ENCODE measurements at regions of chr6 and their contacts with region 1.

Region 1: DNA sequence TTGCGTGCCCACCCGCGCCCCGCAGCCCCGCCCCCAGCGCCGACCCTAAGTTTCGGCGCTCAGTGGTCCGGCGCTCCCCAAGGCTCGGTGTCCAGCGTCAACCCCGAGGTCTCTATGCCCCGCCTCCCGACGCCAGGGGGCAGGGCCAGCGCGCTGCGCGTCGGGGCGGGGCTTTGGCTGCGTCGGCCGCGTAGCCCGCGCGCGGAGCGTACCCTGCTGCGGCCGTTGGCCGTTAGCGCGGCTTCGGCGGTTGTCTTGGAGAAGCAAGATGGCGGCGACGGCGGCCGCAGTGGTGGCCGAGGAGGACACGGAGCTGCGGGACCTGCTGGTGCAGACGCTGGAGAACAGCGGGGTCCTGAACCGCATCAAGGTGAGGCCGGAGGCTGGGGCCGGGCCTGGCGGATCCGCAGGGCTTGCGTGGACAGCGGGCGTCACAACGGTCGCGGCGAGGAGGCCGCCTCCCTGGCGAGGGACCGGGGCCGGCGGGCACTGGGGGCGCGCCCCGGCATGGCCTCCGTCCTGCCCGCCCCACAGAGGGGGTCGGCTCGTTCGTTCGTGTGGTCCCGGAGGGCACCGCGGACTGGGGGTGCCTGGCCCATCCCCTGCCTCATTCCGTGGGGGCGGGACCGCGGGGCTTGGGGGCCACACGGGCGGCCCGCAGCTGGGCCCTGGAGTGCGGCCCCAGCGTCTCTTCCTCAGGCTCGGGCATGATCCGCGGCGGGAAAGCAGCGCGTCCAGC is at the start of gene CEP43:
- H3K4me3 ChIP-seq: peak within 1 kb of the TSS; percentile 98
- H3K27ac ChIP-seq: peak within 1 kb of the TSS; percentile 82
- H3K4me1 ChIP-seq: peaks cover 5% of the 10 kb centered on the region
- CTCF ChIP-seq: no peak

Region 2: GRCh38 chr6:166956444-166957086 is 42.7 kb before region 1 on chr6 and contains the start of gene RNASET2:
- CTCF ChIA-PET with region 1: interaction called, 5 read pairs
- POLR2A ChIA-PET with region 1: interaction called, 18 read pairs
- H3K4me3 ChIP-seq: peak within 1 kb of the TSS; percentile 87
- H3K27ac ChIP-seq: peak within 1 kb of the TSS; percentile 52; the same call in 1 of the 2 replicates
- H3K4me1 ChIP-seq: peaks cover 6% of the 10 kb centered on the region; the same call in 1 of the 2 replicates
- CTCF ChIP-seq: no peak

Region 3: DNA sequence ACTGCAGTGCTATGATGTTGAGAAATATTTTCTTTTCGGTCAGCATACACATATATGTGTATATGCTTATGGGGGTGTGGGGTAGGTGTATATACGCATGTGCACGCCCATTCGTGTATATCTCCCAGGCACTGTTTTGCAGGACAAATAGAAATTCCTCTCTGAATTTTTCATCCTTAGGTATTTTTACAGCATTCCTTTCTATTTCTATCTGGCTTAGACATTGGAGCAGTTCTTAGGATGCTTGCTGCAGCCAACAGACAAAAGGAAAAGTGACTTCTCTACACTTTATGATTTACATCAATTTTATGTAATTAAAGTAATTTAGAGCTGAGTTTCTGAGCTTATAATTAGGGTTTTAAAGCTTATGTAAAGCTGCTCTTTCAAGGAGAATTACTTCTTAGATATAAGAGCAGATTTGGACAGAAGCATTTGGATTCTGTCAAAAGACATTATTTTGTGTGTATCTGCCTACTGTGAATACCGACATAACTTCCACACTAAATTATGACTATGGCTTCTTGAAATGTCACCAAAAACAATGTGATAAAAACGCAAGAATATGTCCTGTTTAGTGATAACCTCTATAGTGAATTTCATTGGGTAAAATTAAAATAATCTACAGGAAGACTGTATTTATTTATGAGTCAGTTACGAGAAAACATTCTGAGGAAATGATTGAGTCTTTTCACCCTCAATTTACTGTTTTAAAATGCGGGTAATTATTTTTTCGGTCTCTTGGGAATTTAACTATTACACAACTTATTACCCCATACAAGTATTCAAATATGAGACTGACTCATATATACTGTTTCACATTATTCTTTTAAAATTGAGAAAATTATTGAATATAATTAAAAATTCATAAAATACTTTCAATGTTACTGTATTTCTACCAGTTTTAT is 21.4 kb before region 1 on chr6:
- CTCF ChIA-PET with region 1: no interaction called
- POLR2A ChIA-PET with region 1: no interaction called
- H3K4me3 ChIP-seq: no peak overlapping the region
- H3K27ac ChIP-seq: no peak overlapping the region
- H3K4me1 ChIP-seq: no peaks in the 10 kb centered on the region
- CTCF ChIP-seq: no peak